Colonic mucosa (tissue), 4 donors: ENCODE measurements at regions of chrX and their contacts with region 1.

Region 1: DNA sequence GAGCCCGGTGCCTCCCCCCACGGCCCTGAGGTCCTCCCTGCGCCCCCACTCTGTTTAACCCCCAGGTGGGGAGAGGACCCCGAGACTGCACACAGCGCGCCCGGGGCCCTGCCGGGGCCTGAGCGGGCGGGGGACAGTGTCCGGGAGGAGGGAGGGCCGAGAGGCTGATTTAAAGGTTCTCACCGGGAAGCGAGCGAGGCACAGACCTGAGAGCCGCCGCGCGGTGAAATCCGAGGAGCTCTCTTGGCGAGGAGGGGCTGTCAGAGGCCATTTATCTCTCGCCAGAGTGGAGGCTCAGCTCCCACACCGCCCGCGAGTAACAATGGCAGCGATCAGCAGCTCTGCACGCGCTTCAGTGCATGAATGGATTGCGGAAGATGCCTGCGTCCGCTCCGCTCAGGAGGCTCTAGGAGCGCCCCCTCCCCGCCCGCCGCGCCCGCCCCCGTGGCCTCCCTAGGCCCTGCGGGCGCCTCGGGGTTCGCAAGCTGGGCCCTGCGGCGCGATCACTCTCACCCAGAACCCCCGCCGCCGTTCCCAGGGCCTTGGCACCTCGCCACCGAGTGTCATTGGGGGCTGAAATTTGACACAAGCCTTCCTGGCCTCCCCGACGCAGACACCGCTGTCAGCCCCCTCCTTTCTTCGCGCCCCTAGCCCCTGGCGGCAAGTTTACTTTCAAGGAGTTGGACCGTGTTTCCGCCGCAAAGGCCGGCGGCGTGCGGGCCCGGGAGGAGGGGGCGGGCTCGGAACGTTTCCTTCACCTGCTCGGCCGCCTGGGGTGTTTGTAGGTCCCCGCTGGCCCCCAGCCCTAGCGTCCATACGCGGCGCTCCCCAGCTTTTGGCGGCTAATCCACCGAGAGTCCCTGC is 48.7 kb upstream of the BCOR start:
- DNase-seq: peak; percentile 22
- H3K4me3 ChIP-seq: peak overlapping the region; percentile 31
- H3K27ac ChIP-seq: no peak overlapping the region
- H3K4me1 ChIP-seq: no peaks in the 10 kb centered on the region
- H3K27me3 ChIP-seq: peaks cover 47% of the 10 kb centered on the region
- CTCF ChIP-seq: no peak

Region 2: GRCh38 chrX:39749720-39750119 is 396.8 kb before region 1 on chrX:
- intact Hi-C with region 1: no loop called
- DNase-seq: no peak
- H3K4me3 ChIP-seq: no peak overlapping the region
- H3K27ac ChIP-seq: no peak overlapping the region
- H3K4me1 ChIP-seq: no peaks in the 10 kb centered on the region
- H3K27me3 ChIP-seq: no peaks in the 10 kb centered on the region
- CTCF ChIP-seq: no peak

Region 3: GRCh38 chrX:40109288-40110008 is 37.0 kb before region 1 on chrX:
- intact Hi-C with region 1: loop called (anchors 5 kb)
- DNase-seq: peak; percentile 68
- H3K4me3 ChIP-seq: peak overlapping the region; percentile 45
- H3K27ac ChIP-seq: peak overlapping the region; percentile 82
- H3K4me1 ChIP-seq: peaks cover 12% of the 10 kb centered on the region
- H3K27me3 ChIP-seq: peaks cover 43% of the 10 kb centered on the region
- CTCF ChIP-seq: no peak

Region 4: DNA sequence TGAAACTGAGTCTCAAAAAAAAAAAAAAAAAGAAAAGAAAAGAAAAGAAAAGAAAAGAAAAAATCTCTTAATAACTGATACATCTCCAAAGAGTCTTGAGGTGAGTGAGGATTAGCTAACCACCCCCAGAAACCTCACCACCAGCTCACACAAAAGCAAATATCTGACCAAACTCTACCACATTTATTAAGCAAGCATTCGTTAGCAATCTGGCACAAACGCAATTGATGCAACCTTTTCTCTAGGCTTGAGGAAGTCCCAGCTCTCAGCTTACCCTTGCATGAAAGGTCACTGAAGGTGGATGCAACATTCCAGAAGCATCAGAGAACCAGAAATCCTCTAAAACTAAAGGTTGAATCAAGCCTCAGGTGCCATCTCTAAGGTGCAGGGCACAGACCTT is 183.1 kb after region 1 on chrX:
- intact Hi-C with region 1: no loop called
- DNase-seq: no peak
- H3K4me3 ChIP-seq: no peak overlapping the region
- H3K27ac ChIP-seq: no peak overlapping the region
- H3K4me1 ChIP-seq: no peaks in the 10 kb centered on the region
- H3K27me3 ChIP-seq: no peaks in the 10 kb centered on the region
- CTCF ChIP-seq: no peak

Region 5: GRCh38 chrX:40459571-40460158 is 313.2 kb after region 1 on chrX:
- intact Hi-C with region 1: no loop called
- DNase-seq: no peak
- H3K4me3 ChIP-seq: no peak overlapping the region
- H3K27ac ChIP-seq: no peak overlapping the region
- H3K4me1 ChIP-seq: no peaks in the 10 kb centered on the region
- H3K27me3 ChIP-seq: no peaks in the 10 kb centered on the region
- CTCF ChIP-seq: no peak